Activated T-helper 1 cell treated with anti-CD3 and anti-CD28 coated beads, Interleukin-12 subunit alpha, Interleukin-12 subunit beta, Interleukin-2, Interleukin-4 antibody, amounts not matched to agents 30 ng/mL and 10 ng/mL and 1 ng/mL, durations not matched to agents 14 hours and 24 hours and 36 hours (primary cell): ENCODE measurements at regions of chr10 and their contacts with region 1.

Region 1: DNA sequence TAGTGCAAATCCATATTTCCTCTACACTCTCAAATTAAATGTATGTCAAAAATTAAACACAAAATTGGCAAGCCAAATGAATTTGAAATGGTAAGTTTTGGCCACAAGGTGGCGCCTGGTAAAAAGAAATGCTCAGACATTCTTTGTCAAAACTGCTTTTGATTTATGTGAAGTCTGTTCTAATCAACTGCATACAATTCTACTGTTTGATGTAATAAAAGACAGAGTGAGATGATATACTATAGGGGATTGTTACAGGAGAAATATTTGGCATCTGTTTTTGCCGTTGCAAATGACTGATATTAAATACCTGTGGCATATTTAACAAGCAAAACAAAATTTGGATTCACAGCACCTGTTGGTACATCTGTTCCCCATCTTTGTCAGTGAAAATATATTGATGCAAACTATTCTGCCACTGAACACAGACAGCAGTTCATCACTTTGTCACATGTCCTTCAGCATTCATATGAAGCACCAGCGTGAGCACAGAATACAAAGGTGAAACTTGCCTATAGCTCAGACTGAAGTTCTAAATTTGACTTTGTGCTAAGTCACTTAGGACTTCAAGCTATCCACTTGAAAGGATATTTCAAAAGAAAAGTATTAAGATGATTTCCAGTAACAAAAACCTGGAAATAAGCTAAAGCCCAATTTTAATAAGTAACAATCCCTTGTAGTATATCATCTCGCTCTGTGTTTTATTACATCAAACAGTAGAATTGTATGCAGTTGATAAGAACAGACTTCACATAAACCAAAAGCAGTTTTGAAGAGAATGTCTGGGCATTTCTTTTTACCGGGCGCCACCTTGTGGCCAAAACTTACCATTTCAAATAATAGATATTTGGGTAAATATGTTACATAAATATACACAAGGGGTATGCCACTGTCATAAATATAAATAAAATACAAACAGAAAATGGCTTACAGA is 10.2 kb upstream of the CH25H start:
- DNase-seq: peak; percentile 22
- H3K4me3 Mint-ChIP-seq: no peak overlapping the region
- H3K27ac Mint-ChIP-seq: no peak overlapping the region
- H3K4me1 Mint-ChIP-seq: peaks cover 17% of the 10 kb centered on the region
- H3K27me3 Mint-ChIP-seq: peaks cover 1% of the 10 kb centered on the region

Region 2: DNA sequence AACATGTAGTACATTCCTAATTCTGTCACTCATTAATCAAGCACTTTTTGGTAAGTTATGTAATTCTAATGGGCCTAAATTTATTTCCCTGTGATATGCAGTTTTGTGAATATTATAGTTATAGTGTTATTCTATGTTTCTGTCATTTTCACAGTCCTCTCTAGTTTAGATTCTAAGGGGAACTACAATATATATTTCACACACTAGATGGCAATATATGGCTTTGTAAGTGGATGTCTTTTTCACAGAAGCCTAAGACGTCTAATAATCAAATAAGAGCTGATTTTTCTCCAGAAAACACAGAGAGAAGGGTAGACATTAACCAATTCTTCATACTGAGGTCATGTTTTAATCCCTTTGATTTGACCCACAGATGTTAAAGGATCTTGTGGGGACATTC is 652.3 kb before region 1 on chr10:
- intact Hi-C with region 1: loop called (anchors 2 kb)
- DNase-seq: no peak
- H3K4me3 Mint-ChIP-seq: no peak overlapping the region
- H3K27ac Mint-ChIP-seq: no peak overlapping the region
- H3K4me1 Mint-ChIP-seq: peaks cover 4% of the 10 kb centered on the region
- H3K27me3 Mint-ChIP-seq: peaks cover 18% of the 10 kb centered on the region

Region 3: GRCh38 chr10:89563861-89564478 is 346.6 kb after region 1 on chr10:
- intact Hi-C with region 1: loop called (anchors 1 kb)
- DNase-seq: no peak
- H3K4me3 Mint-ChIP-seq: no peak overlapping the region
- H3K27ac Mint-ChIP-seq: no peak overlapping the region
- H3K4me1 Mint-ChIP-seq: no peaks in the 10 kb centered on the region
- H3K27me3 Mint-ChIP-seq: peaks cover 24% of the 10 kb centered on the region